Posterior cingulate gyrus (tissue), 11 donors: ENCODE measurements at regions of chr4 and their contacts with region 1.

Region 1: DNA sequence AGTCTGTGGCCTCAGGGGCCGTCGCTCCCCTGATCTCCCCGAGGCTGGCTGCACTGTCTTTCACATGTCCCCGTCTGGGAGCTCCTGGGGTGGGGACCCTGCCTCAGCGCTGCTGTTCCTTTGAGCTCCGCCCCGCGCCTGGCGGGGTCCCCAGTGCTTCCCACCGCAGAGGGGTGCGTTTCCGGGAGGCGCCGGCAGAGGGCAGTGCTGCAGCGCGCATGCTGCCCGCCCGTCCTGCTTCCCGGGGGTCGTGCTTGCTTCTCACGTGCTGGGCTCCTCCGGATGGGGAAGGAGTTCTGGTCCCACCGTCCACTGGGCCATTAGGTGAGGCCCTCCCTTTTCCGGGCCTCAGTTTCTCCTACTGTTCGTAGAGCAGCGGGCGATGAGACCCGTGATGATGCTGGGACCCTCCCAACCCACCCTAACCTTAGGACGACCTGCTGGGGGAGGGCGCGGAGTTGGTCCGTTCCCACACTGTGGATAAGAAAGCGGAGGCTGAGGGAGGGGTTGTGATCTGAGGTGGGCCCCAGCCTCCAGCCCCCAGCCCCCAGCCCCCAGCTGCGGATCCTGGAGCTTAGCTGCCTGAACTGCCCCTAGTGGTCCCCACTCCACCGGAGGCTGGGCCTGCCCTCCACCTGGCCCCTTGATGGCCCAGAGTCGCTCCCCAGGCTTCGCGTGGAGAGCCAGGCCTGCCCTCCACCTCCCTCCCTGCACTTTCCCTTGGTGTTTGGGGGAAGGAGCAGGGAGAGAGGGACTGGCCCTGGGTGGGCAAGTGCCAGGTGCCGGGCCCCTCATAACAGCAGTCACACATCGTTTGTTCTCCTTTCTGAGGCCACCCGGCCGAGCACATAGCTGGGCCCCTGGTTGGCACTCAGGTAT is 15.3 kb downstream of the CPZ start:
- DNase-seq: peak in 6 of 10 donors; percentile 36 to 92 (median 58)

Region 2: DNA sequence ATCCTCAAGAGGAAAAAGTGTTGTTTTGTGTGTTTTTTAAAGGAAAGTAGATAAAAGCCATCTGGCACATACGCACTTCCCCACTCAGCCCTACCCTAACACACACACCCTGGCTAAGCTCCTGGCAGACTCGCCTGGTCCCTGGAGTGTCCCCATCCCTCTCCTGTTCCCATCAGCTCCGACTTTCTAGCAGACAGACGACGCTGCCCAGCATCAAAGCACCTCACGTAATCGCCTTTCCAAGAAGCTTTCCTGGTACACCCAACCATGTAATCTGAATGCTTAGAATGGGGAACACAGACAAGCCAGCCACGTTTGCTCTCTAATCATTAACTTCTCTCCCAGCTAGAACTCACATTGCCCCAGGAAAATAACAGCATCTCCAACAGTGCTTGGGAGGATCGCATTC is 784.4 kb before region 1 on chr4:
- intact Hi-C with region 1: no loop called
- DNase-seq: peak in 5 of 10 donors; percentile 39 to 88 (median 60)

Region 3: GRCh38 chr4:8860892-8861575 is 253.2 kb after region 1 on chr4:
- intact Hi-C with region 1: no loop called
- DNase-seq: peak in 2 of 10 donors; percentile 58 to 64

Region 4: GRCh38 chr4:8871417-8872401 is 263.9 kb after region 1 on chr4 and contains the start of gene HMX1:
- intact Hi-C with region 1: loop called (anchors 10 kb)
- DNase-seq: peak; percentile 39 to 94 (median 66)